ENCODE measurements at regions of chr9 and their contacts with region 1.

Region 1: DNA sequence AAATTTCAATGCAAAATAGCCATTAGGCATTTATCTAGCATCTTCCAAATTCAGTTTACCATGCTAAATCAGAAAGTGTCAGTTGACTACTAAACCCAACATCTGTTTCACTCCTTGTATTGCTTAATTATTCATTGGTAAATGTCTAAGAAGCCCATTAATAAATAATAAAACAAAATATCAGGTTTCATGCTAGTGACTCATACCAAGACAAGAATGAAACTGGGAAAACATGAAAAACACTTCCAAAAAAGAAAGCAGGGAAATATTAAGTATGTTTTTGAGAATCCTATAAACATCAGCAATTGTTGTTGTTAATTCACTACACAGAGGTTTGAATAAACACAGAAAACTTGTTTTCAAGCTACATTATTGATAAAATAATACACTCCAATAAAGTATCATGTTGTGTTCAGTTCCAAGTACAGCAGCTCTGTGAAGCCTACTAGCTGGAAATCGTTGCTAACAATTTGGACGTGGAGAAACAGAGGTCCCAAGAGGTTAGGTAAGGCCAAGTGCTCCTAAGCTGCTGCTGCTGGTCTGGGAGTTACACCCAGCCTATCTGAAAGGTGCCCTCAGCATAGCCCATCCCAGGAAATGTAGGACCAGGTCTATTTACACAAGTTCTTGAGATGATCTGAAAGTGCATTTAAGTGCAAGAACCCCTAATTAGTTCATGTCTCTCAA is 78.8 kb downstream of the GNAQ start:
- DNase-seq: no peak
- H3K4me3 Mint-ChIP-seq: no peak overlapping the region
- H3K27ac Mint-ChIP-seq: no peak overlapping the region
- H3K4me1 Mint-ChIP-seq: peaks cover 9% of the 10 kb centered on the region
- H3K27me3 Mint-ChIP-seq: no peaks in the 10 kb centered on the region
- CTCF ChIP-seq: no peak

Region 2: GRCh38 chr9:77899679-77900354 is 53.0 kb before region 1 on chr9:
- CTCF ChIA-PET with region 1: no interaction called
- intact Hi-C with region 1: loop called (anchors 10 kb)
- DNase-seq: no peak
- H3K4me3 Mint-ChIP-seq: no peak overlapping the region
- H3K27ac Mint-ChIP-seq: no peak overlapping the region
- H3K4me1 Mint-ChIP-seq: peaks cover 55% of the 10 kb centered on the region
- H3K27me3 Mint-ChIP-seq: no peaks in the 10 kb centered on the region
- CTCF ChIP-seq: no peak

Region 3: DNA sequence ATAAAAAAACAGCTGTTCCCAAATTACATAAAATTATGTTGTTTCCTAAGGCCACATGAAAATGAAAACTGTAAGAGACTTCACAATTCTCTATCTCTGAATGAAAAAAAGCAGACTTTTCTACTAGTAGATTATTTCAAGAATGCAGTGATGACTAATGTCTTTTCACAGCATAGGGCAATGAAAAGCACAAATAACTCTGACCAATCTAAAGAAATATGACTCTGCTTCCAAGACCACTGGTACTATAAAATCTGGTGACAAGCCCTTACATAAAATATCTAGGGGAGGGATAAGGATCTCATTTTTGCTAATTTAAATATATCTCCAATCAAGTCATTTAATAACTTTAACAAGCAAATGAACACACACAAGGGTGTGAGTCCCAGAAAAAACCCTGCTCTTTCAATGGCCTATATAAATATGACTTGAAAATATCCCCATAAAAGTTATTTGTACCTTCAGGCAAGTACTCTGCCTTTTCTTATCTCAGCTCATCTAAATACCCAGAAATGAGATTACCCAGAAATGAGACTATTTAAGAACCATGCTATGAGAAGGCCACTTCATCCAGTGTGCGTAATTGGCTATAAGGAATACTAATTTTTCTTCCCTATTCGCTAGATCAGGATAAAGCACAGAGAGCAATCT is 26.4 kb before region 1 on chr9:
- CTCF ChIA-PET with region 1: no interaction called
- intact Hi-C with region 1: no loop called
- DNase-seq: no peak
- H3K4me3 Mint-ChIP-seq: no peak overlapping the region
- H3K27ac Mint-ChIP-seq: no peak overlapping the region
- H3K4me1 Mint-ChIP-seq: peaks cover 11% of the 10 kb centered on the region
- H3K27me3 Mint-ChIP-seq: no peaks in the 10 kb centered on the region
- CTCF ChIP-seq: no peak

Measured in Calu3 (cell line).